Natural killer cell (primary cell): ENCODE measurements at regions of chr17 and their contacts with region 1.

Region 1: DNA sequence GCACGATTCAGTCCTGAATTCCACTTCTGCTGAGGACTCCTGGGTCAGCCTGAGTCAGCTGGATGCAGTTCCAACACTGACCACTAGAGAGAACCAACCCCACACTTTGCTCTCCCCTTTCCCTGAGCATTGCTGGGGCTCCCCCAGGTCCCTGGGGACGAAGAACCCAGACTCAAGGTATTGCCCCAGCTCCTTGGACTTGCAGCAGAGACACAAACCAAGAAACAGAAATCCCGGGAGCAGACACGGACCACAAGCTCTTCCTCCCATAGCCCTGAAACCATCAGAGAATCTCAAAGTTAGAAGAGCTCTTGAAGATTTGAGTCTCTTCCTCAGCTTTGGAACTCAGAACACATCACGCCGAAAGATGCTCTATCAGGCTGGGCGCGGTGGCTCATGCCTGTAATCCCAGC is 678 bp upstream of the GH1 start:
- DNase-seq: peak; percentile 64 to 91
- ATAC-seq: peak; percentile 91 to 100 (median 100)
- H3K4me3 ChIP-seq: no peak overlapping the region
- H3K4me3 Mint-ChIP-seq: no peak overlapping the region
- H3K27ac ChIP-seq: no peak overlapping the region
- H3K27ac Mint-ChIP-seq: peak overlapping the region in 1 of 2 donors; percentile 68
- H3K4me1 ChIP-seq: peaks cover 19% of the 10 kb centered on the region
- H3K4me1 Mint-ChIP-seq: peaks cover 8 to 11% of the 10 kb centered on the region in 2 donors
- H3K27me3 ChIP-seq: no peaks in the 10 kb centered on the region
- H3K27me3 Mint-ChIP-seq: peaks cover 4 to 7% of the 10 kb centered on the region in 2 donors
- CTCF ChIP-seq: peak; percentile 95

Region 2: GRCh38 chr17:63946440-63947367 is 27.4 kb after region 1 on chr17:
- intact Hi-C with region 1: loop called (anchors 1 kb)
- DNase-seq: peak; percentile 47 to 83
- ATAC-seq: peak; percentile 69 to 90 (median 83)
- H3K4me3 ChIP-seq: peak overlapping the region; percentile 26
- H3K4me3 Mint-ChIP-seq: peak overlapping the region; percentile 78
- H3K27ac ChIP-seq: peak overlapping the region; percentile 68
- H3K27ac Mint-ChIP-seq: peak overlapping the region; percentile 14 to 81
- H3K4me1 ChIP-seq: peaks cover 41% of the 10 kb centered on the region
- H3K4me1 Mint-ChIP-seq: peaks cover 13 to 24% of the 10 kb centered on the region in 2 donors
- H3K27me3 ChIP-seq: no peaks in the 10 kb centered on the region
- H3K27me3 Mint-ChIP-seq: no peaks in the 10 kb centered on the region
- CTCF ChIP-seq: peak; percentile 80

Region 3: DNA sequence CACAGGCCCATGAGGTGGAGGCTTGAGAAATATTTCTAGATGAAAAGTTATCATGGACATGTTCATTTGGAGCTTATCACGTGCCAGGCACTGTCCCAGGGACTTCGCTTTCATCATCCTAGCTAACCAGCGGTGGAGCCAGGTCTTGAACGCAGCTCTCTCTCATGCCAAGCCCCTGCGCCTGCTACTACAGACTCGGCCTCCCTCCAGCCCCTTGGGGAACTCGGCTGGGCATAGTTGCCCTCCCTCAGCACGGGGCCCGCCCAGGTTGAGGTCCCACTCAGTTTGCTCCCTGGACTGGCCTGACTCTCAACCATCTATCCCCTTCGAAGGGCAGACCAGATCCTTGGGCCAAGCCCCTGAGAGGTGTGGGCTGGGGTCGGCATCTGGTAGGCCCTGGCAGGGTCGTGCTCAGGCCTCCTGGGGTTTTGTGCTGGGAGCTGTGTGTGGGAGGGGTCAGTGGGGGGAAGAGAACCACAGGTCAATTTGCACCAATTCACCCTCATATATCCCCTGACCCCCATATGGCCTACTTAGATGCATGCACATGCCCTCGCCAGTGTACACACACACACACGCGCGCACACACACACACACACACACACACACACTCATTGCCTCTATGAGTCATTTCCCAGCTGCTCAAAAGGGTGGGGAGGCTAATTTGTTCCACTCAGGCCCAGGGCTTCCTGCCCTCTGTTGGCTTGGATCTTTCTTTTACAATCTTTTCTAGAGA is 65.5 kb after region 1 on chr17:
- intact Hi-C with region 1: loop called (anchors 1 kb)
- DNase-seq: peak; percentile 58 to 80
- ATAC-seq: peak; percentile 91 to 98 (median 98)
- H3K4me3 ChIP-seq: no peak overlapping the region
- H3K4me3 Mint-ChIP-seq: peak overlapping the region; percentile 62
- H3K27ac ChIP-seq: peak overlapping the region; percentile 32
- H3K27ac Mint-ChIP-seq: peak overlapping the region; percentile 67 to 86
- H3K4me1 ChIP-seq: peaks cover 32% of the 10 kb centered on the region
- H3K4me1 Mint-ChIP-seq: peaks cover 14 to 30% of the 10 kb centered on the region in 2 donors
- H3K27me3 ChIP-seq: no peaks in the 10 kb centered on the region
- H3K27me3 Mint-ChIP-seq: no peaks in the 10 kb centered on the region
- CTCF ChIP-seq: no peak

Region 4: GRCh38 chr17:64129764-64130558 is 210.6 kb after region 1 on chr17 and contains the start of gene ERN1:
- intact Hi-C with region 1: loop called (anchors 1 kb)
- DNase-seq: peak; percentile 90 to 93
- ATAC-seq: peak; percentile 88 to 97 (median 89)
- H3K4me3 ChIP-seq: peak within 1 kb of the TSS; percentile 50
- H3K4me3 Mint-ChIP-seq: peak within 1 kb of the TSS; percentile 92
- H3K27ac ChIP-seq: peak within 1 kb of the TSS; percentile 84
- H3K27ac Mint-ChIP-seq: peak within 1 kb of the TSS; percentile 88 to 91
- H3K4me1 ChIP-seq: peaks cover 16% of the 10 kb centered on the region
- H3K4me1 Mint-ChIP-seq: peaks cover 34 to 48% of the 10 kb centered on the region in 2 donors
- H3K27me3 ChIP-seq: no peaks in the 10 kb centered on the region
- H3K27me3 Mint-ChIP-seq: no peaks in the 10 kb centered on the region
- CTCF ChIP-seq: no peak
- total RNA-seq, gene ERN1: 52.9 to 90.5 (median 67.2) TPM

Region 5: DNA sequence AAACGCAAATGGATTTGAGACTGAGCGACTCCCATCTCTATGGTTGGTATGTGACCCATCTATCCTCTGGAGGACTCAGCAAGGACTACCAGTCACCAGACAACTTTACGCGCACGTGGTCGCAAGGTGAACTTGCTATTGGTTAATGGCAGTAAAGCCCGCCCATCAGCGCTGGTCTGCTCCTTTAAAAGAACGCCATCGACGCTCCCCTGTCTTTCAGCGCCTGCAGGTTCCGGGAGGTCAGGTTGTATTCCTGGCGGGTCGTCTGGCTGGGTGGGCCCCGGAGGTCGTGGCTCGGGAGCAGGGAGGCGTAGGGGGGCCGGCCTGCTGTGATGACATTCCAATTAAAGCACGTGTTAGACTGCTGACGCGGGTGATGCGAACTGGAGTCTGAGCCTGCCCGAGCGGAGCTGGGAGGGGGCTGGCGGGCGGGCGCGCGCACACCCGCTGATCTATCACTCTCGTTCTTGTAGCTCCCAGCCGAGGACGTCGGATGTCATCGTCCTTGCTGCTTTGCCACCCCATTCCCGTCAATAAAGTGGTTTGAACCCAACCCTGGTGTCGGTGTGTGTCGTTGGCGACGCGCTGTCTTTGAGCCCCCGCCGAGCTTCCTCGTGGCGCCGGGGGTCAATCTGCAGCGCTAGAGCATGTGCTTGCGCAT is 226.6 kb after region 1 on chr17:
- intact Hi-C with region 1: loop called (anchors 5 kb)
- DNase-seq: peak; percentile 86 to 98
- ATAC-seq: peak; percentile 94 to 100 (median 97)
- H3K4me3 ChIP-seq: peak overlapping the region; percentile 62
- H3K4me3 Mint-ChIP-seq: no peak overlapping the region
- H3K27ac ChIP-seq: peak overlapping the region; percentile 87
- H3K27ac Mint-ChIP-seq: no peak overlapping the region
- H3K4me1 ChIP-seq: peaks cover 20% of the 10 kb centered on the region
- H3K4me1 Mint-ChIP-seq: peaks cover 0 to 8% of the 10 kb centered on the region in 2 donors
- H3K27me3 ChIP-seq: no peaks in the 10 kb centered on the region
- H3K27me3 Mint-ChIP-seq: no peaks in the 10 kb centered on the region
- CTCF ChIP-seq: no peak

Region 6: GRCh38 chr17:64281962-64282727 is 362.8 kb after region 1 on chr17:
- intact Hi-C with region 1: loop called (anchors 5 kb)
- DNase-seq: peak; percentile 26 to 83
- ATAC-seq: peak; percentile 59 to 85 (median 82)
- H3K4me3 ChIP-seq: no peak overlapping the region
- H3K4me3 Mint-ChIP-seq: no peak overlapping the region
- H3K27ac ChIP-seq: no peak overlapping the region
- H3K27ac Mint-ChIP-seq: no peak overlapping the region
- H3K4me1 ChIP-seq: no peaks in the 10 kb centered on the region
- H3K4me1 Mint-ChIP-seq: no peaks in the 10 kb centered on the region
- H3K27me3 ChIP-seq: no peaks in the 10 kb centered on the region
- H3K27me3 Mint-ChIP-seq: no peaks in the 10 kb centered on the region
- CTCF ChIP-seq: peak; percentile 71